Activated T-helper 2 cell treated with anti-CD3 and anti-CD28 coated beads, Interferon-gamma antibody, Interleukin-2, Interleukin-4, amounts not matched to agents 10 μg/mL and 5 μg/mL and 100 μg/mL, durations not matched to agents 14 hours and 24 hours and 36 hours (primary cell): ENCODE measurements at regions of chr18 and their contacts with region 1.

Region 1: GRCh38 chr18:32552421-32553030 is 81.8 kb upstream of the GAREM1 start:
- DNase-seq: peak; percentile 28
- H3K4me3 Mint-ChIP-seq: no peak overlapping the region
- H3K27ac Mint-ChIP-seq: no peak overlapping the region
- H3K4me1 Mint-ChIP-seq: no peaks in the 10 kb centered on the region
- H3K27me3 Mint-ChIP-seq: peaks cover 16% of the 10 kb centered on the region

Region 2: GRCh38 chr18:32271672-32272208 is 280.8 kb before region 1 on chr18:
- intact Hi-C with region 1: loop called (anchors 1 kb)
- DNase-seq: no peak
- H3K4me3 Mint-ChIP-seq: no peak overlapping the region
- H3K27ac Mint-ChIP-seq: no peak overlapping the region
- H3K4me1 Mint-ChIP-seq: no peaks in the 10 kb centered on the region
- H3K27me3 Mint-ChIP-seq: peaks cover 6% of the 10 kb centered on the region

Region 3: GRCh38 chr18:32289483-32290075 is 262.9 kb before region 1 on chr18:
- intact Hi-C with region 1: loop called (anchors 5 kb)
- DNase-seq: peak; percentile 14
- H3K4me3 Mint-ChIP-seq: no peak overlapping the region
- H3K27ac Mint-ChIP-seq: no peak overlapping the region
- H3K4me1 Mint-ChIP-seq: no peaks in the 10 kb centered on the region
- H3K27me3 Mint-ChIP-seq: peaks cover 7% of the 10 kb centered on the region